ENCODE measurements at regions of chr18 and their contacts with region 1.

Region 1: DNA sequence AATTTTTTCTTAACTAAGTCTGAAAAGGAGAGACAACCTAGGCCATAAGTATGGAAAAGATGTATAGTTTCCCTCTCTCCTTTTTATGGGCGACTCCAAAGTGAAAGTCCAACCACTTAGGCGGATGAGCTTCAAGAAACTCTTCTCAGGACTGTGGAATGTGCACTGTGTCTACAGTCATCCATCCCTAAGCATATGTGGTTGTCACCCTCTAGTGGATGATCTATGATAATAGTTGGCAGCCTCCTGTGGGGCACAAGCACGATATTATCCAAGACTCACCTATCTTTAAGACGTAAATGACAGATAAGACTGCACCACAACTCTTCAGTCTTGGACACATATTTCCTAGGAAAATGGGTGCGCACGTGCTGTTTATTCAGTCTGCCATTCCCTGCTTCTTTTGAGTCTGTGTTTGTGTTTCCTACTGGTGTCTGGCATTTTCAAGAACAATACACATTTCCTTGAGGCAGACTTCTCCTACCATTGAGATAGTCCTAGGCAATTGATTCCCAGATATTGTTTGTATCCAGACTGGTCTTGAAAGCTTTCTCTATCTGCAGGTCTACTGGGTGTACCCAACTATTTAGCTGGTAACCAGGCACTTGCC is 145.5 kb upstream of the CTAGE1 start:
- DNase-seq: no peak
- ATAC-seq: peak; percentile 76

Region 2: DNA sequence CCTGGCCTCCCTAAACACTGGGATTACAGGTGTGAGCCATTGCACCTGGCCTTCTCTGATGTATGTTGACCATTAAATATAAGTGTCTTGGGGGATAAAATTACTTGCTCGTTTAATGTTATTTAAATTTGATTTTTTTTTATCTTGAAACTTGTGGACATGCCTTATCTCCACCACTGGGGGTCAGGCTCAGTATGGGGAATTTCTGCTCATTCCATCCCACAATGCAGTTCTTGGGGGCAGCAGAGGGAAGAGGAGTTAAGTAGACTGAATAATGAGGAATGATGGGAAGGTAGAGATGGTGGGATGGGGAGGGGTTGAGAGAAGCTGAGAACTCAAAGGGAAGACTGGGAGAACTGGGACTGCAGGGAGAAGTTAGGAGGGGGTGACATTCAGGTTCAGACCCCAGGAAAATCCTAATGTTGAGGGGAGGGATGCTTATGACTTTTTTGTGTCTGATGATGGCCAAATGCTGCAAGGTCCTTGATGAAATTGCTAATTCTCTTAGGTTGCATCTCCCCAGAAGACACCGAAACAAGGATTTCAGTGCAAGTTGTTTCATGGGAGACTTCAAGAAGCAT is 648.4 kb before region 1 on chr18:
- intact Hi-C with region 1: loop called (anchors 2 kb)
- DNase-seq: no peak
- ATAC-seq: peak; percentile 67

Region 3: DNA sequence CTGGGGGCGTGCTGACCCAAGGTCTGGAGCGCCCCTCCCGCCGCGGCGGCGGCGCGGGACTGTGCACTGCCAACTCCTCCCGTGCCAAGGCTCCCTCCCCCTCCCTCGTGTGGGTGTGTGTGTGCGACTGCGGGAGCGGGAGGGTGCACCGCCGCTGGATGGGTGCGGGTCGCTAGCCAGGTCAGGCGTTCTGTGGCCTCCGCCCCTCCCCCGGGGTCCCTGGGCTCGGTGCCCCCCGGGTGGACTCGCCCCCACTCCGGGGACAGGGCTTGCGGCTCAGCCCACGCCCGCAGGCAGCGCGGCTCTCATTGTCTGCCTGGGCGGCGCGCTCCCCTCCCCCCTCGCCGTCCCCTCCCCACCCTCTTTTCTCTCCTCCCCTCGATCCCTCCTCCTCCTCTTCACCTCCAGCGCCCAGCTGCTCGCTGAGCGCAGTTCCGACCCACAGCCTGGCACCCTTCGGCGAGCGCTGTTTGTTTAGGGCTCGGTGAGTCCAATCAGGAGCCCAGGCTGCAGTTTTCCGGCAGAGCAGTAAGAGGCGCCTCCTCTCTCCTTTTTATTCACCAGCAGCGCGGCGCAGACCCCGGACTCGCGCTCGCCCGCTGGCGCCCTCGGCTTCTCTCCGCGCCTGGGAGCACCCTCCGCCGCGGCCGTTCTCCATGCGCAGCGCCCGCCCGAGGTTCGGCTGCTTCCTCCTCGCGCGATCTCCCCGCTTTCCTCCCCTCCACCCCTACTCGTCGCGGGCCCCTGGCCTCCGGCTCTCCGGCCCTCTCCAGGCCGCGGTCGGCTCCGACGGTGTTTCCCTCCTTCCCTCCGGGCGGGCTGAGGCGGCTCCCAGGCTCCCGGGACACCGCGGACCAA is 394.0 kb before region 1 on chr18 and contains the start of gene GATA6:
- intact Hi-C with region 1: loop called (anchors 2 kb)
- DNase-seq: peak; percentile 92
- ATAC-seq: peak; percentile 85
- total RNA-seq, gene GATA6: 56.3 TPM

Region 4: GRCh38 chr18:22348521-22349316 is 214.5 kb before region 1 on chr18:
- intact Hi-C with region 1: loop called (anchors 2 kb)
- DNase-seq: peak; percentile 89
- ATAC-seq: peak; percentile 70

Region 5: DNA sequence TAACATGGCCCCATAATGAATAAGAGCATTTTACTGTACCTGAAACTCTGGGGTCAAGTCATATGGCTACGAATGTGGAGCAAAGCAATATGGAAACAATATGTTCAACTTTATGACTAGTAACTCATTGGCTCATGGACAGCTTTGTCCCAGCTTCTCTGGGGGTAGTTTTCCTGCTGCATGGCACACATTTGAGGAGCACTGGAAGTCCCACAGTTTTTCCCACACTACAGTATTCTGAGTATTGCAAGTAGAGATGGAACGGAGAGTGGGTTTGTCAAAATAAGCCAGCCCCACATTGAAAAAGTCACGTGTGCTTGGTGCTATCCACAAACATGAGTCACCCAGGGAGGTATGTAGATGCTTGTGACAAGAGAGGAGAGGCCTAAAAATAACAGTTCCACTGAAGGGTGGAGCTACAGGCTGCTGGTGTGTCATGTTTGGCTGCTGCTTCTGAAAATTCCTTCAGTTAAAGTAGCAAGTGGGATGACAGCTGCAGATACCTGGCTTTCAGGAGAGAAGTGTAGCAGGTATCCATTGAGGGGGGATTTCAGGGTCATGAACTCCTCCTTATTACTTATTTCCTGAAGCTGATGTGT is 97.2 kb before region 1 on chr18:
- intact Hi-C with region 1: loop called (anchors 1 kb)
- DNase-seq: no peak
- ATAC-seq: peak; percentile 90

Region 6: GRCh38 chr18:22485808-22486244 is 77.4 kb before region 1 on chr18:
- intact Hi-C with region 1: no loop called
- DNase-seq: no peak
- ATAC-seq: no peak

Region 7: GRCh38 chr18:22521026-22521707 is 42.0 kb before region 1 on chr18:
- intact Hi-C with region 1: no loop called
- DNase-seq: no peak
- ATAC-seq: peak; percentile 82

Region 8: DNA sequence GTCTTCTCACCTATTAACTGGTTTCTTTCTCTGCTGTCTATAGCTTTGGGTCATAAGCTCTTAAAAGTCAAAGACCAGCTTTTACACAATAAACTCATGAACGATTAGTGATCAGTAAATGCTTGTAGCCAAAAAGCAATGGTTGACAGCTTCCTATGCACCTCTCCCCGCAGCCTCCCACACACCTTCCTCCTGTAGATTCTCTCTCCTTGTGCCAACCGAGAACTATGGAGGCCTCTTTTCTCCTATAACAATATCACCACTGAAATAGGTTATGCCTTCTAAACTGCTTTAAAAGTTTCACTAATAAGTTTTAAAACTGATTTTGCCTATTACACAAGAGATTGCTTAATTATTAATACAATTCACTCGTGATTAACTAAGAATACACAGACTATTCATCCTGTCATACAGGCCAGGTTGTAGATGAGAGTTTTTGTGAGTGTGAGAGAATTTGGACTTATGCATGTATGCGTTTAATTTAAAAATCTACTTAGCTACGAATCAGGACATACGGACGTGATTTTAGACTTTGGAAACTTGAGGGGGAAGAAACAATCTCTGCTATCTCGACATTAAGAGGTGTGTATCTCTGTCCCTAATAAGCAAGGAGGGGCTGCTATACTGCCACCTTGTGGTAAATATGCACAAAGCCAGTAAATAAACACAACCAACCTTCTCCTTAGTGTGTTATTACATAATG is 140.8 kb after region 1 on chr18:
- intact Hi-C with region 1: loop called (anchors 10 kb)
- DNase-seq: no peak
- ATAC-seq: peak; percentile 68

Measured in Right ventricle myocardium inferior (tissue), 1 donor.